Heart right ventricle (tissue), 16 donors: ENCODE measurements at regions of chr12 and their contacts with region 1.

Region 1: GRCh38 chr12:116277393-116278278 is at the start of gene MED13L:
- DNase-seq: peak; percentile 87 to 91
- ATAC-seq: peak; percentile 90 to 96 (median 94)
- H3K4me3 ChIP-seq: peak within 1 kb of the TSS; percentile 77 to 96 (median 88)
- H3K27ac ChIP-seq: peak within 1 kb of the TSS; percentile 89 to 100 (median 95)
- H3K4me1 ChIP-seq: peaks cover 0 to 56% (median 29%) of the 10 kb centered on the region in 9 donors
- H3K27me3 ChIP-seq: no peaks in the 10 kb centered on the region
- CTCF ChIP-seq: peak in 7 of 9 donors; percentile 15 to 73 (median 52)
- total RNA-seq, gene MED13L: 53.8 to 76.5 (median 67.0) TPM

Region 2: DNA sequence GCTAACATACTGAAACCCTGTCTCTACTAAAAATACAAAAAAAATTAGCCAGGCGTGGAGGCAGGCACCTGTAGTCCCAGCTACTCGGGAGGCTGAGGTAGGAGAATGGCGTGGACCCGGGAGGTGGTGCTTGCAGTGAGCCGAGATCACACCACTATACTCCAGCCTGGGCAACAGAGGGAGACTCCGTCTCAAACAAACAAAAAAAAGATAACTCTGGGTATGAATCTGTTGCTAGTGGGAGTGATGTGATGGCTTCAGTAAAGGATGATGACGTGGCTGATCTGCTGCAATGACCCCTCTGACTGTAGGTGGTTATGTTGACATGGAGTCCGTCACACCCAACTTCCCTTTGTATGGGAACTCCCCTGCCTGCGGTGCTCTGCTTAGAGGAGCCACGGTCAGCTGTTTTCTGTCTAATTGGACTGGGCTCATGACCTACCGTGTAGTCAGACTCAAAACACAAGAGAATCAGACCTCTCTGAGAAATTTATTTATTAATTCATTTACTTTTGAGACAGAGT is 59.0 kb after region 1 on chr12:
- intact Hi-C with region 1: no loop called
- DNase-seq: no peak
- ATAC-seq: no peak
- H3K4me3 ChIP-seq: no peak overlapping the region
- H3K27ac ChIP-seq: no peak overlapping the region
- H3K4me1 ChIP-seq: peaks cover 0 to 4% (median 0%) of the 10 kb centered on the region in 9 donors
- H3K27me3 ChIP-seq: no peaks in the 10 kb centered on the region
- CTCF ChIP-seq: no peak

Region 3: DNA sequence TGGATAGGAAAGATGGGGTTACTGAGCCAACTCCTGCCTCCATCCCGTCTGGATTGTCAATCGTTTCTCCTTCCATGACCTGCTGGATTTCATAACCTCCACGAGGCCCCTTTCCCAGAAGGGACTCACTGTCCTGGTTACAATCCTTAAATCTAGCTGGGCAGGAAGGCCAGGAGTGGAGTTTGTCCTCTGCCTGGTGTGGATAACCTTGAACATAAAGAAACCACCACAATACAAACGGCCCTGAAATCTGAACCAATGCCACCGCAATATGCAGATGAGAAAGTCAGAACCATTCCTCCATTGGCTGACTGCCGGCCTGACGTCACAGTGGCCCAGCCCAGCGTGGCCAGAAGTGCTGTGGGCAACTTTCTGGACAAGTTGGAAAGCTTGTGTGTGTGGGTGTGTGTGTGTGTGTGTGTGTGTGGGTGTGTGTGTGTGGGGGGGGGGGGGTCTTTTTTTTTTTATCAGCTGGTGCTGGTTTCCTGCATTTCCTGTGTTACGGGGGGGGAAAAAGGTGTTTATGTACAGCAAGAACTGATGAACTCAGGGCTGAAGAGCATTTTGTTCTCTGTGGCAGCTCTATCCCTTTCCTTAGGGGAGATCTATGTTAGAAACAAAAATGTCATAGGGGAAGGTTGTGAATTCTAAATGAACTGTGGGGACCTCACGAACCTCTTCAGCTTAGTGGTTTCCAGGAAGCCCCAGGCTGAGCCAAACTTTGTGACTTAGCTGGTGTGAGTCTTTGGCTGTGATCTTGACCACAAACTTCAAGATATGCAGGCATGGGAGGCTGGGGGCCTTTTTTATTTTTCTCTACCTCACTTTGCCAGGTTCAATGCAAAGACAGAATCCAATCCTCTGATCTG is 81.5 kb after region 1 on chr12:
- intact Hi-C with region 1: loop called in 1 of 10 experiments (anchors 10 kb)
- DNase-seq: peak; percentile 90 to 93
- ATAC-seq: peak; percentile 92 to 99 (median 96)
- H3K4me3 ChIP-seq: peak overlapping the region in 4 of 10 donors; percentile 17 to 30 (median 22)
- H3K27ac ChIP-seq: peak overlapping the region; percentile 47 to 76 (median 70)
- H3K4me1 ChIP-seq: peaks cover 0 to 26% (median 8%) of the 10 kb centered on the region in 9 donors
- H3K27me3 ChIP-seq: no peaks in the 10 kb centered on the region
- CTCF ChIP-seq: no peak

Region 4: DNA sequence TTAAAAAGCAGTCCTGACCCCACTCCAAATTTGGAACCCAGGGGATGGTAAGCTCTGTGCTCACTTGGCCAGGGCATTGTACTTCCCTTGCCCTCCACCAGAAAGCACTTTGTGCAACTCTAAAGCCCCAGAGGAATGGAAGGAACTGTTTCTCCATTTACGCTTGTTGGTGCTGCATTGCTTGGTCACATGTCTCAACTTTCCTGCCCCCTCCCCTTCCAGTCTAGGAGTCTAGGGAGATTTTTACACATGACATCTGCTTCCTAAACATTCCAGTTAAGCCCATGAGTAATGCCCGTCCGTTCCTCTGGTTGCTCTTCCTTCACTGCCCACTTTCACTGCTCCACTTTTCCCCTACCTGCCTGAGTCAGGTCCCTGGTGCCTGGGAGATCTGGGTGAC is 188.9 kb after region 1 on chr12:
- intact Hi-C with region 1: no loop called
- DNase-seq: no peak
- ATAC-seq: no peak
- H3K4me3 ChIP-seq: no peak overlapping the region
- H3K27ac ChIP-seq: no peak overlapping the region
- H3K4me1 ChIP-seq: no peaks in the 10 kb centered on the region
- H3K27me3 ChIP-seq: no peaks in the 10 kb centered on the region
- CTCF ChIP-seq: no peak

Region 5: GRCh38 chr12:116591855-116592637 is 314.4 kb after region 1 on chr12:
- intact Hi-C with region 1: loop called in 3 of 10 experiments (anchors 5 to 10 kb)
- DNase-seq: peak in 1 of 2 donors; percentile 30
- ATAC-seq: peak in 6 of 8 donors; percentile 8 to 66 (median 44)
- H3K4me3 ChIP-seq: no peak overlapping the region
- H3K27ac ChIP-seq: peak overlapping the region in 1 of 10 donors; percentile 56
- H3K4me1 ChIP-seq: peaks cover 0 to 36% (median 18%) of the 10 kb centered on the region in 9 donors
- H3K27me3 ChIP-seq: no peaks in the 10 kb centered on the region
- CTCF ChIP-seq: no peak

Region 6: DNA sequence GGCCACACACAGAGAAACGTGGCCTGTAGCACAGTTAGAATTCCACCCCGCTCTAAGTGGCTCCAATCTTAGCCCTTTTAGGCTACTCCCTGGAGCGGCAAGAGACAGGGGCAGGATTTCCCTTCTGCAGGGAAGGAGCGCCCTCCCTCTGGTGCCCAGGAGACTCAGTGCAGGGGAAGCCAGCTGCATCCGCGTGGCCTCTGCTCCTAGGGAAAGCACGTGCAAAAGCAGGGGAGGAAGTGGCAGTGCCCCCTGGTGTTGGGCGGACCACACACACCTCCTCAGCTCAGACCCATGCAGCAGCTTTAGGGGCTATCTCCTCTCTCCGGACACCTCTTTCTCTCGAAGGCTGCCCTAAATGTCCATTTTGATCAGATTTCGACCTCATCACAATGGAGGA is 410.3 kb after region 1 on chr12:
- intact Hi-C with region 1: loop called in 2 of 10 experiments (anchors 10 kb)
- DNase-seq: peak; percentile 29 to 65
- ATAC-seq: peak; percentile 63 to 86 (median 78)
- H3K4me3 ChIP-seq: no peak overlapping the region
- H3K27ac ChIP-seq: no peak overlapping the region
- H3K4me1 ChIP-seq: peaks cover 0 to 11% (median 2%) of the 10 kb centered on the region in 9 donors
- H3K27me3 ChIP-seq: peaks cover 0 to 27% (median 19%) of the 10 kb centered on the region in 7 donors
- CTCF ChIP-seq: peak; percentile 12 to 70 (median 53)